ENCODE measurements at regions of chr7 and their contacts with region 1.

Region 1: DNA sequence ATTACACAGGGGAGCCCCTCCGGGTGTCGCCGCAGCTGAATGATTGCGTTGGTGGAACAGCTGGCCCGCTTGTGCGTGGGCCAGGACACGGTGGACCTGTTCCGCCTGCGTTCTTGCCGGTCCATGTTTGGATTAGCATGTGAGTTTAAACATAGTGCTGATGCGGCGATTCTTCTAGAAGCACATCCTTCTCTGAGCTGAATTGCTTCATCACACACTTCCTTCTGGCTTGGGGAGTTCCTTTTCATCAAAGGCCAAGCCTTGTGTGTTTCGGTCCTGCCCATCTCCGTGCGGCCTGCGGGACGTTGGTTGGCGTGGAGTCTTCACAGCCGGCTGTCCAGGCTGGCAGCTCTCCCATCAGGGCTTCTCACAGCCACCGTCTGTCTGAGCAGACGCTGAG is 45.5 kb upstream of the SLC29A4 start:
- DNase-seq: peak; percentile 81

Region 2: GRCh38 chr7:5450549-5451372 is 213.5 kb after region 1 on chr7:
- intact Hi-C with region 1: loop called (anchors 2 kb)
- DNase-seq: peak; percentile 83

Measured in cardiac septum (tissue), 1 donor.